CD4-positive, alpha-beta memory T cell (primary cell): ENCODE measurements at regions of chr19 and their contacts with region 1.

Region 1: DNA sequence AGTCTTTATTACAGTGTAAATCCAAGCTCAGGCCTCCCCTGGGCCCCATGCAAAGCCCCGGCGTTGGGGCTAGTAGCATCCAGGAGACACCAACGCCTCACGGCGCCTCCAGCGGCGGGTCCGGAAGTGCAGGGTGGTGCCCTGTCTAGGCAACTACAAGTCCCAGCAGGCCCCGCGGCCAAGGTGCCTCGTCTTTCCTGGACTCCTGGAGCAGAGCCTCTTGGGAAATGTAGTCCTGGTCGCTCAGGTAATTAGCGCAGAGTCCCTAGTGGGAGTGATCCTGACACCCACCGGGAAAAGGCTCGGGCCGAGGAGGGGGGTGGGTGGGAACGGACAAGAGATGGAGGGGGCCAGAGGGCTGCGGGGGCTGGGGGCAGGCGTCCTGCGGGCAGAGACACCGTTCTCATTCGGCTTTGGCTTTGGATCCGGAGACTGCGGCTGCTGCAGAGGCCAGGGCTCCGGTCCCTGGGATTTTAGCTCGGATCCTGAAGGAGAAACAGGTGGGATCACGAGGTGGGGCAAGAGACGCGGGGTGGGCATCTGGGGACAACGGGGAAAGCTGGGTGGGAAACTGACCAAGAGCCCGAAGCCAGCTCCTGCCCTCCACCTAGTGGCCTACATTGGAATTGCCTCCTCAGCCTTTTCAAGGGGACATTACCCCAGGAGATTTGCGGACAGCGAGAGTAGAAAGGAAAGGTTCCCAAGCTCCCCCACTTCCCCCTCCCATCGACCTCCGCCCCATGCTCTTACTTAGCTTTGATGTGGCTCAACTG is 11.4 kb downstream of the RTN2 start:
- DNase-seq: peak; percentile 93 to 97 (median 95)
- H3K4me3 ChIP-seq: peak overlapping the region; percentile 66 to 88
- H3K4me3 Mint-ChIP-seq: peak overlapping the region; percentile 91 to 97 (median 93)
- H3K27ac ChIP-seq: peak overlapping the region; percentile 34
- H3K27ac Mint-ChIP-seq: peak overlapping the region; percentile 72 to 94 (median 89)
- H3K4me1 ChIP-seq: peaks cover 5% of the 10 kb centered on the region
- H3K4me1 Mint-ChIP-seq: peaks cover 0 to 11% (median 7%) of the 10 kb centered on the region in 4 donors
- H3K27me3 ChIP-seq: no peaks in the 10 kb centered on the region
- H3K27me3 Mint-ChIP-seq: peaks cover 2 to 3% of the 10 kb centered on the region in 2 donors

Region 2: GRCh38 chr19:45254037-45254531 is 231.4 kb before region 1 on chr19:
- CTCF ChIA-PET with region 1: no interaction called
- POLR2A ChIA-PET with region 1: no interaction called
- intact Hi-C with region 1: no loop called
- DNase-seq: peak in 3 of 5 donors; percentile 5 to 45 (median 6)
- H3K4me3 ChIP-seq: no peak overlapping the region
- H3K4me3 Mint-ChIP-seq: peak overlapping the region; percentile 15 to 94 (median 75)
- H3K27ac ChIP-seq: no peak overlapping the region
- H3K27ac Mint-ChIP-seq: peak overlapping the region in 6 of 7 donors; percentile 37 to 92 (median 79)
- H3K4me1 ChIP-seq: peaks cover 42% of the 10 kb centered on the region
- H3K4me1 Mint-ChIP-seq: peaks cover 21 to 45% (median 31%) of the 10 kb centered on the region in 4 donors
- H3K27me3 ChIP-seq: no peaks in the 10 kb centered on the region
- H3K27me3 Mint-ChIP-seq: no peaks in the 10 kb centered on the region

Region 3: DNA sequence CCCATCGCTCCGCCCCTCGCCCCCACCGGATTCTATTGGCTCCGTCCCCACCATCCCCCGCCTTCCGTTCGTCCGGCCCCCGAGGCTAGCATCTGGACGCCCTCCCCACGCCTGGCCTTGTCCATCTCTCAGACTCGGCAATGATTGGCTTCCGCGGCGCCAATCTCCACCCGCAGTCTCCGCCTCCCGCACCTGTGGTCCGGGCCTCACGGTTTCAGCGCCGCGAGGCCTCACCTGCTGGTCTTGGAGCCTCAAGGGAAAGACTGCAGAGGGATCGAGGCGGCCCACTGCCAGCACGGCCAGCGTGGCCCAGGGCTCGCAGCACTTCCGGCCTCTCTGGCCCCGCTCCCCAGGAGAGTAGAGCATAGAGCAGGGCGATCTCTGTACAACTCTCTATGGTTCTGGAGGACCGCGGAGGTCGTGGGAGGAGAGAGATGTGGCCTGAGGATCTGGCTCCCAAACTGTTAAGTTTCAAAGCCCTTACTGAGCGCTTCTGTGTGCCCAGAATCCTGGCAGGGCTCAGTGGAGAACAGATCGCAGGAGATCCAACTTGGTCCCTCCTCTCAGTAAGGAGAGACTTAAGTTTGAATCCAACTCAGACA is 61.8 kb before region 1 on chr19 and contains the start of gene ERCC1:
- CTCF ChIA-PET with region 1: interaction called, 66 read pairs
- POLR2A ChIA-PET with region 1: no interaction called
- intact Hi-C with region 1: loop called (anchors 1 kb)
- DNase-seq: peak in 4 of 5 donors; percentile 67 to 87 (median 71)
- H3K4me3 ChIP-seq: peak within 1 kb of the TSS; percentile 54 to 74
- H3K4me3 Mint-ChIP-seq: peak within 1 kb of the TSS; percentile 91 to 97 (median 94)
- H3K27ac ChIP-seq: peak within 1 kb of the TSS; percentile 68
- H3K27ac Mint-ChIP-seq: peak within 1 kb of the TSS; percentile 89 to 97 (median 94)
- H3K4me1 ChIP-seq: peaks cover 36% of the 10 kb centered on the region
- H3K4me1 Mint-ChIP-seq: peaks cover 28 to 58% (median 41%) of the 10 kb centered on the region in 4 donors
- H3K27me3 ChIP-seq: no peaks in the 10 kb centered on the region
- H3K27me3 Mint-ChIP-seq: peaks cover 0 to 2% of the 10 kb centered on the region in 2 donors
- total RNA-seq, gene ERCC1: 46.6 to 46.9 TPM

Region 4: GRCh38 chr19:45469132-45469944 is 16.2 kb before region 1 on chr19:
- CTCF ChIA-PET with region 1: interaction called, 65 read pairs
- POLR2A ChIA-PET with region 1: interaction called, 19 read pairs
- intact Hi-C with region 1: no loop called
- DNase-seq: peak; percentile 92 to 97 (median 96)
- H3K4me3 ChIP-seq: peak overlapping the region; percentile 93 to 100
- H3K4me3 Mint-ChIP-seq: peak overlapping the region; percentile 93 to 96 (median 95)
- H3K27ac ChIP-seq: peak overlapping the region; percentile 98
- H3K27ac Mint-ChIP-seq: peak overlapping the region; percentile 99 to 100 (median 99)
- H3K4me1 ChIP-seq: peaks cover 27% of the 10 kb centered on the region
- H3K4me1 Mint-ChIP-seq: peaks cover 9 to 73% (median 21%) of the 10 kb centered on the region in 4 donors
- H3K27me3 ChIP-seq: no peaks in the 10 kb centered on the region
- H3K27me3 Mint-ChIP-seq: peaks cover 2 to 3% of the 10 kb centered on the region in 2 donors

Region 5: GRCh38 chr19:45506246-45506990 is 20.9 kb after region 1 on chr19:
- CTCF ChIA-PET with region 1: interaction called, 10 read pairs
- POLR2A ChIA-PET with region 1: interaction called, 5 read pairs
- intact Hi-C with region 1: loop called (anchors 1 kb)
- DNase-seq: peak; percentile 96 to 98 (median 97)
- H3K4me3 ChIP-seq: peak overlapping the region; percentile 95 to 97
- H3K4me3 Mint-ChIP-seq: peak overlapping the region; percentile 87 to 96 (median 94)
- H3K27ac ChIP-seq: peak overlapping the region; percentile 90
- H3K27ac Mint-ChIP-seq: peak overlapping the region; percentile 96 to 99 (median 97)
- H3K4me1 ChIP-seq: peaks cover 35% of the 10 kb centered on the region
- H3K4me1 Mint-ChIP-seq: peaks cover 20 to 61% (median 34%) of the 10 kb centered on the region in 4 donors
- H3K27me3 ChIP-seq: no peaks in the 10 kb centered on the region
- H3K27me3 Mint-ChIP-seq: no peaks in the 10 kb centered on the region

Region 6: GRCh38 chr19:45660636-45661035 is 175.1 kb after region 1 on chr19:
- CTCF ChIA-PET with region 1: no interaction called
- POLR2A ChIA-PET with region 1: no interaction called
- intact Hi-C with region 1: no loop called
- DNase-seq: no peak
- H3K4me3 ChIP-seq: no peak overlapping the region
- H3K4me3 Mint-ChIP-seq: no peak overlapping the region
- H3K27ac ChIP-seq: no peak overlapping the region
- H3K27ac Mint-ChIP-seq: no peak overlapping the region
- H3K4me1 ChIP-seq: no peaks in the 10 kb centered on the region
- H3K4me1 Mint-ChIP-seq: peaks cover 0 to 10% (median 4%) of the 10 kb centered on the region in 4 donors
- H3K27me3 ChIP-seq: no peaks in the 10 kb centered on the region
- H3K27me3 Mint-ChIP-seq: peaks cover 3% of the 10 kb centered on the region in 2 donors